Prostate gland (tissue), 2 donors: ENCODE measurements at regions of chr18 and their contacts with region 1.

Region 1: DNA sequence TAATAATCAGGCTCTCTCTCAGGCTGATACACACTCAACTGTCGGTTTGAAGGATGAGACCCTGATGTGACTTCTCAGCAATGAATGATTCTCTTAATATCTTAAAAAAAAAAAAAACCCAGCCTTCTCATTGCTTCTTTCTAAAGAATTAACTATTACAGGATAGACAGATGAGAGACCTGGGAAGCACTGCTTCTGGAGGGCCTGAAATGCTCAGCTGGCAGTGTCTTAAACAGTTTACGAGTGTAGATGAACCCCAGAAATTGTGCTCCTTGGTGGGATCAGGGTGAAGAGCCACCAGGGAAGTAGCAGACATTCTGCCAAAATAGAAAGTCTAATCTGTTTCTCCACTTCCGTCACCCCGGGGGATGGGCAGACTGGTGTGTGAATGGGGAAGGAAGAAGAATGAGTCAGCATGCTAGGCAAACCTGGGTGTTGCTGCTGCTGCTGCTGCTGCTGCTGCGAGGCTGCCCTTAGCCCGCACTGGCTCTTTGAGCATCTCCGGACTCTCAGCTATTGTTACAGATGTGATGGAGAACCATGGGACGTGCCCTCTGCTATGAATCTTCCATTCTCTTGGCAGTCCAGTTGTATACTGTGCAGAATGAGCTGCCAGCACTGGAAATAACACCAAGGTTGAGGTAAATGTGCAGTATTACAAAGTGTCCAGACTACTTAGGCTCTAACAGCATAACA is 158.4 kb downstream of the SETBP1 start:
- DNase-seq: peak; percentile 36
- H3K4me3 ChIP-seq: no peak overlapping the region
- H3K27ac ChIP-seq: peak overlapping the region in 1 of 2 donors; percentile 8
- H3K4me1 ChIP-seq: peaks cover 16% of the 10 kb centered on the region
- H3K27me3 ChIP-seq: no peaks in the 10 kb centered on the region
- CTCF ChIP-seq: no peak
- POLR2A ChIP-seq: no peak

Region 2: DNA sequence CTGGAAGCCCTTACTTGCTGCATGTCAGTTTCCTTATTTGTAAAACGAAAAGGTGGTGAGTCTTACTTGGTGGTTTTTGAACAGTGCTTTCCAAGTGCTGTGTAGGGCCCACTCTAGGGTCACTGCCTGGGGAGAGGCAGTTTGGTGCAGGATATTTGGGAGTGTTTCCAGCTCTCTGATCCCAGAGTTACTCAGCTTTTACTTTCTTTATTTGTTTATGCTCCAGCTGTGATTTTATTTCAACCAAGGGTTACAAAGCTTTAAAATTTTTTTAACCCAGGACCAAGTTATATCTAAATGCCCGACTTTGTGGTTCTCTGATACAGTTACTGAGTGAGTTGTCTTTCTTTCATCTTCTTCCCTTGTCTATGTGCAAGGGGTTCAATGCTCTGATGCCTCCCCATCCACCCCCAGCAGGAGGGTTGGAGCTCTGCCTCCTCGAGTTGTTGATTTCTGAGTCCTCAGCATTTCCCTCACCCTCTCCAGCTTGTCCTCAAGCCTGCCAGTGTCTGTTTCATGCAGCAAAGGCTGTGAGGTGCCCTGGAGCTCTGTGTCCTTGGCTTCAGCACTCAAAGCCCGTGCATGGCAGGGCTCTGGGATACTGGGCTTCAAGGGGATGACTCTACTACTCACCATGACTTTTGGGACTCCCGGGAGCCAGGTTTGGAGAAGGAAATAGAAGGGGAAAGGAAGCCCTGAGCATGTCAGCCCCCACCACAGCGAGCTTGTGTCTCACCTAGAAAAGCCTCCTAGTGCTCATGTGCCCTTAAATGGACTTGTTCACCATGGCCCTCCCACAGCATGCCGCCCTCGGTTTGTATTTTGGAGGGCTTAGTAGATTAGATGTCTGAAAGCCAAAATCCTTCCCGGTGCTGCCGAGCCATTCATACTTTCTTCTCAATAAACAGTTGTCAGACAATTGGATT is 78.4 kb after region 1 on chr18:
- intact Hi-C with region 1: loop called (anchors 10 kb)
- DNase-seq: no peak
- H3K4me3 ChIP-seq: no peak overlapping the region
- H3K27ac ChIP-seq: peak overlapping the region; percentile 47 to 51
- H3K4me1 ChIP-seq: no peaks in the 10 kb centered on the region
- H3K27me3 ChIP-seq: no peaks in the 10 kb centered on the region
- CTCF ChIP-seq: no peak
- POLR2A ChIP-seq: no peak